Tibial artery (tissue), 4 donors: ENCODE measurements at regions of chr17 and their contacts with region 1.

Region 1: DNA sequence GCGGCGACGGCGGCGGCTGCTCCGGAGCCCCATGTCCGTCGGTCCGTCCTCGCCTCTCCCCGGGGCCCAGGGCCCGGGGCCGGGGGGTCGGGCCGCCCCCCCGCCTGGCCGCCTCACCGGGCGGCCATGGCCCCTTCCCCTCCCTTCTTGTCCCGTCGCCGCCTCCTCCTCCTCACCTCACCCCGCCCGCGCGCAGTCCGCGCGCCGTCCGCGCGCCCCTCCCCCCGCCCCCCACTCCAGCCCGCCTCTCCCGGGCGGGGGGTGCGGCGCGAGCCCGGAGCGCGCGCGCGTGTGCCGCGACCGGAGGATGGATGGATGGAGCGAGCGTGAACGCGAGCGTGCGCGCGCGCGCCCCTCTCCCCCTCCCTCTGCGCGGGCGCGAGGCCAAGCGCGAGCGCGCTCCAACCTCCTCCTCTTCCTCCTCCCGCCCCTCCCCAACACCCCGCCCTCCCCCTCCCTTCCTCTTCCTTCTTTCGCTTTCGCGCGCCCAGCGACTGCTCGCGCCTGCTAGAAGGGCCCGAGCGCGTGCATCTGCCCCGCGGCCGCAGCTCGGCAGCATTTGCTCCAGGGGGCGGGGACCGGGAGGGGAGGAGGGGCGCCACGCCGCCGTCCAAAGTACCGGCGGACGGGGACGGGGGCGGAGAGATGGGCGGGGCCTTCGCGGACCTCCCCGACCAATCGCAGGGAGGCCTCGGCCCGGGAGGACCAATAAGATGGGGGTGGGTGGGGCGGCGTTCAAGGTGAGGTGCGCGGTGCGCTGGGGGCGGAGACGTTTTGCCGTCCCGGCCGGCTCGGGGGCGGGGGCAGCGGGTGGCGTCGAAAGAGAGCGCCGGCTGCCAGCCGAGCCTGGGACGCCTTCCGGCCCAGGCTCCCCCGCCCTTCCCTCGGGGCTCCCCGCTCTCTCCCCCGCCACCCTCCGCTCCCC is at the start of gene ATXN7L3:
- DNase-seq: peak; percentile 99 to 100
- H3K4me3 ChIP-seq: peak within 1 kb of the TSS; percentile 87 to 94
- H3K27ac ChIP-seq: peak within 1 kb of the TSS; percentile 95 to 97
- H3K4me1 ChIP-seq: peaks cover 0 to 22% (median 15%) of the 10 kb centered on the region in 4 donors
- H3K27me3 ChIP-seq: no peaks in the 10 kb centered on the region
- CTCF ChIP-seq: no peak

Region 2: DNA sequence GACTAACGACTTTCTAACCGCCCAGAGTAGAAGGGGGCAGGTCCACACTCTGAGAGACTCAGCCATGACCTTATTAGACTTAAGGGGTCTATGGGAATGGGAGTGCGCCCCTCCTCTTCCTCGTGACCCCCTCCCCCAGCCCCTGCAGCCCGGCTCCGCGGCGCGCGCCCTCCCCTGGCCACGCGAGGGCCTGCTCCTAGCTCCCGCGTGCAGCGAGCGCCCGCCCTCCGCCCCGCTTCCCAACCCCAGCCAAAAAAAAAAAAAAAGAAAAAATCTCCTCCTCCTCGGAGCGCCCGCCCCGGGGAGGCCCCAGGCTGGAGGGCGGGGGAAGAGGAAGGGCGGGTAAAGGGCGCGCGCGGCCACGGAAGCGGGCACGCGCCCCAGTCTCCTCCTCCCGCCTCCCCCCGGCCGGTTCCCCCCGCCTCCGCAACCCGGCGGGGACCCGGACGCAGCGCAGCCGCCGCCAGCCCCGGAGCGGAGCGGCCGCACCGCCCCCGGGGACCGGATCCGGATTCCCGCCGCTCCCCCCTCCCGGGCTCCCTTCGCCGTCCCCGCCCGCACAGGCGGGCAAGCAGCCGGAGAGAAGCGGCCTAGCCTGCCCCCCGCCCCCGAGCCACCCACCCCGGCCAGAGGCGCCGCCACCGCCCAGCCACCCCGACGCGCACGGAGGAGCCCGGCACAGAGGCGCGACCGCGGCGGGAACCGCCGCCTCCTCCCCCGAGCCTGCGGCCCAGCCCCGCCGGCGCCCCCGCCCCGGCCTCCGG is 18.7 kb after region 1 on chr17:
- intact Hi-C with region 1: loop called (anchors 1 kb)
- DNase-seq: peak; percentile 77 to 94
- H3K4me3 ChIP-seq: peak overlapping the region; percentile 81 to 83
- H3K27ac ChIP-seq: peak overlapping the region; percentile 94 to 99
- H3K4me1 ChIP-seq: peaks cover 0 to 36% (median 28%) of the 10 kb centered on the region in 4 donors
- H3K27me3 ChIP-seq: no peaks in the 10 kb centered on the region
- CTCF ChIP-seq: peak; percentile 32 to 72

Region 3: DNA sequence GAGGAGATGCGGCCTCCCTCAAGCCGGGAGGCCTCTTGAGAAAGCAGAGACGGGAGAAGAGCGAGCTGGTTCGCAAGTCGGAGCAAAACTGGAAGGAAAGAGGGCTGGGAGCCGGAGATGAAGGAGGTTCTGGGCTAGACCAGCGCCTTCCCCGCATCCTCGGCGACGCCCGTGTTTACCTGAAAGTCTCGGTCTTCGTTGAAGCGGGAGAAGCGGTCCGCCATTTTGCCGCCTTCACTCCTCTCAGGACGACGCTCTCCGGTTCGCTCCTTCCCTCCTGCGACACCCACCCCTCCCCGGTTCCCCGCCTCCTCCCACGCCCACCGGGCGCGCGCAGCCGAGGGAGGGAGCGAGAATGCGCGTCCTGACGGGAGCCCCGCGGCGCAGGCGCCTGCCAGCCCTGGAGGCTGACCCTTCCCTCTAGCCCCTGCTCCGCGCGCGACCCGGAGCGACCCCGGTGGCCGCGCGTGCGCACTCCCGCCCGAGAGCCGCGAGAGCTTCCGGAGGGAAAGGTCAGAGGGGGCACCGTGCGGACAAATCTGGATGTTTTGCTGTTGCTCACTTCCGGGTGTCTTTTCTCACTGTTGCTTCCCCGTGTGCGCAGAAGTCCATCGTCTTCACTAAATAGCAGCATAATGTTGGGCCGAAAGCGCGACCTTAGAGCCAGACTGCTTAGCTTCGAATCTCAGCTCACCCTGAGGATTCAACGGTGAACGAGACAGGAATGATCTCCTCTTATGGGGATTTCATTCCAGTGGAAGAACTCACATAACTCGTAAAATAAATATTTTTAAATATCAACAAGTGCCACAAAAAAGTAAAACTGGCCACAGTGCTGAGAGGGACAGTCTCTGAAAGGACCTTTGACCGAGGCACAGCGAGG is 303.6 kb after region 1 on chr17 and contains the start of gene GPATCH8:
- intact Hi-C with region 1: loop called (anchors 10 kb)
- DNase-seq: peak; percentile 90 to 97
- H3K4me3 ChIP-seq: peak within 1 kb of the TSS; percentile 68 to 78
- H3K27ac ChIP-seq: peak within 1 kb of the TSS; percentile 84 to 91
- H3K4me1 ChIP-seq: peaks cover 0 to 47% (median 25%) of the 10 kb centered on the region in 4 donors
- H3K27me3 ChIP-seq: peaks cover 0 to under 1% of the 10 kb centered on the region in 2 donors
- CTCF ChIP-seq: no peak